Tibial artery (tissue), 4 donors: ENCODE measurements at regions of chr1 and their contacts with region 1.

Region 1: GRCh38 chr1:154404984-154405761 is at the start of gene IL6R:
- DNase-seq: peak; percentile 96 to 98
- H3K4me3 ChIP-seq: peak within 1 kb of the TSS; percentile 73 to 75
- H3K27ac ChIP-seq: peak within 1 kb of the TSS; percentile 95 to 98
- H3K4me1 ChIP-seq: peaks cover 0 to 38% (median 29%) of the 10 kb centered on the region in 4 donors
- H3K27me3 ChIP-seq: no peaks in the 10 kb centered on the region
- CTCF ChIP-seq: peak; percentile 27 to 48

Region 2: DNA sequence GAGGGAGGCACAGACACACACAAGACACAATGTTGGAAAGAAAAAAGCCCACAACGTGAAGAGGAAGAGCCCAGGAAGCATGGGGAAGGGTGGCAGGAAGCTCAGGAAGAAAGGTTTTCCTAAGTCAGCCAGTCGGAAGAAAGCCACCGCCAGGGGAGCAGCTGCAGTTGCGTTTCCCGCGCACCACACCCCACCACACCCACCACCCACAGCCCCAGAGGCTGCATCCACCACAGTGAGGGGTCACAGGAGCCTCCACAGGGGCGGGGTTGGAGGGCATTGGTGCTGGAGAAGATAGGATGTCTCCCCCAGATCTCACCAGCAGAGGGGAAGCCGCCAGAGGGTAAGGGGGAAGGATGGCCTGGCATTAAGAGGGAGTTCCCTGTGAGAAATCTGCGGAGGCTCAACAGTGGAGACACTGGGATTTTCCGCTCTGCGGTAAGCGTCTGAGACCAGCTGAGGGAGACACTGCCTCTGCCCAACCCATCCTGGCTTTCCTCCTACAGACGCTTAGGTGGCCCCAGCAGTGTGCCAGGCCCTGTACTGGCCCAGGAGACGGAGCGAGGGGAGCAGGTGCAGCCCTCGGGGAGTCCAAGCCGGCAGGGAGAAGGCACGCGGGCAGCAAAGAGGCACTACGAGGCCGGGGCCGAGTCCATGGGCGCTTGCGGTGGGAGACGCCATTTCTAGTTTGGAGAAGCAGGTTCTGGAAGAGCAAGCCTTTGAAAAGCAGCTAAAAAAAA is 1112.3 kb before region 1 on chr1:
- intact Hi-C with region 1: no loop called
- DNase-seq: no peak
- H3K4me3 ChIP-seq: no peak overlapping the region
- H3K27ac ChIP-seq: no peak overlapping the region
- H3K4me1 ChIP-seq: no peaks in the 10 kb centered on the region
- H3K27me3 ChIP-seq: peaks cover 0 to 28% of the 10 kb centered on the region in 2 donors
- CTCF ChIP-seq: no peak

Region 3: GRCh38 chr1:154324669-154325582 is 80.2 kb before region 1 on chr1 and contains the start of gene ATP8B2:
- intact Hi-C with region 1: loop called (anchors 5 kb)
- DNase-seq: peak; percentile 72 to 89
- H3K4me3 ChIP-seq: peak within 1 kb of the TSS; percentile 72 to 90
- H3K27ac ChIP-seq: peak within 1 kb of the TSS; percentile 96 to 99
- H3K4me1 ChIP-seq: peaks cover 6 to 45% (median 32%) of the 10 kb centered on the region in 4 donors
- H3K27me3 ChIP-seq: no peaks in the 10 kb centered on the region
- CTCF ChIP-seq: peak; percentile 91 to 93

Region 4: GRCh38 chr1:154418062-154418921 is 13.1 kb after region 1 on chr1:
- intact Hi-C with region 1: loop called (anchors 1 kb)
- DNase-seq: peak; percentile 51 to 83
- H3K4me3 ChIP-seq: no peak overlapping the region
- H3K27ac ChIP-seq: peak overlapping the region; percentile 88 to 93
- H3K4me1 ChIP-seq: peaks cover 8 to 76% (median 60%) of the 10 kb centered on the region in 4 donors
- H3K27me3 ChIP-seq: no peaks in the 10 kb centered on the region
- CTCF ChIP-seq: no peak

Region 5: GRCh38 chr1:154434346-154435085 is 29.3 kb after region 1 on chr1:
- intact Hi-C with region 1: loop called (anchors 1 kb)
- DNase-seq: peak; percentile 93 to 98
- H3K4me3 ChIP-seq: peak overlapping the region; percentile 32 to 36
- H3K27ac ChIP-seq: peak overlapping the region; percentile 89 to 95
- H3K4me1 ChIP-seq: peaks cover 0 to 74% (median 32%) of the 10 kb centered on the region in 4 donors
- H3K27me3 ChIP-seq: no peaks in the 10 kb centered on the region
- CTCF ChIP-seq: no peak